Endothelial cell of umbilical vein (primary cell): ENCODE measurements at regions of chr19 and their contacts with region 1.

Region 1: GRCh38 chr19:46192992-46193650 is 36.4 kb upstream of the IGFL1 start:
- DNase-seq: no peak
- H3K4me3 ChIP-seq: no peak overlapping the region
- H3K27ac ChIP-seq: no peak overlapping the region
- H3K4me1 ChIP-seq: no peaks in the 10 kb centered on the region
- H3K27me3 ChIP-seq: peaks cover 3 to 19% of the 10 kb centered on the region in 2 experiments
- CTCF ChIP-seq: no peak
- POLR2A ChIP-seq: no peak

Region 2: DNA sequence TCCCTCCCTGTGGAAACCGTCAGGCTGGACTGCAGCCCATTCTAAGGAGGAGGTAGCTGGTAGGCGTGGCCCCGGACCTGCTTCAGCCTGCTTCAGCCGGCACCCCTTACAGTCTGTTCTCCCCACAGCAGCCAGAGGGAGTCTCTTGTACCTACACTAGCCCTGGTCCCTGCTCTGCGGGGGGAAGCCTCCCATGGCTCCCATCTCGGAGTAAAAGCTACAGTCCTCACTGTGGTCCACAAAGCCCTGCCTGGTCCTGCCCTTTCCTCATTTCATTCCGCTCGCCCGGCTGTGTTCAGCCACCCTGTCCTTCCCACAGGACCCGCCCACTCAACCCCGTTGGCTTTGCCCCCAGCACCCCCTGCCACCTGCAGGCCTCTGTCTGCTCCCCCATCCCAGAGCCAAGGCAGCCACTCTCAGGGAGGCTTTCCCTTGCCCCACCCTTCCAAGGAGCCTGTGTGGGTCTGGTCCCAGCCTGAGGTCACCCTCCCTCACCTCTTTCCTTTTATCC is 171.5 kb before region 1 on chr19:
- CTCF ChIA-PET with region 1: interaction called, 60 read pairs
- POLR2A ChIA-PET with region 1: no interaction called
- dilution Hi-C with region 1: no loop called
- intact Hi-C with region 1: no loop called
- DNase-seq: no peak
- H3K4me3 ChIP-seq: no peak overlapping the region
- H3K27ac ChIP-seq: no peak overlapping the region
- H3K4me1 ChIP-seq: peaks cover 5% of the 10 kb centered on the region
- H3K27me3 ChIP-seq: peaks cover 2 to 5% of the 10 kb centered on the region in 2 experiments
- CTCF ChIP-seq: no peak
- POLR2A ChIP-seq: no peak

Region 3: GRCh38 chr19:46068345-46069258 is 124.5 kb before region 1 on chr19:
- CTCF ChIA-PET with region 1: no interaction called
- POLR2A ChIA-PET with region 1: no interaction called
- dilution Hi-C with region 1: no loop called
- intact Hi-C with region 1: no loop called
- DNase-seq: peak; percentile 79
- H3K4me3 ChIP-seq: no peak overlapping the region
- H3K27ac ChIP-seq: peak overlapping the region; percentile 28
- H3K4me1 ChIP-seq: peaks cover 31% of the 10 kb centered on the region
- H3K27me3 ChIP-seq: no peaks in the 10 kb centered on the region
- CTCF ChIP-seq: no peak
- POLR2A ChIP-seq: no peak